ENCODE measurements at regions of chrX and their contacts with region 1.

Region 1: GRCh38 chrX:6325437-6325836 is 96.8 kb upstream of the NLGN4X start:
- DNase-seq: no peak
- ATAC-seq: no peak
- H3K4me3 ChIP-seq: no peak overlapping the region
- H3K4me3 Mint-ChIP-seq: no peak overlapping the region
- H3K27ac ChIP-seq: no peak overlapping the region
- H3K27ac Mint-ChIP-seq: no peak overlapping the region
- H3K4me1 ChIP-seq: no peaks in the 10 kb centered on the region
- H3K4me1 Mint-ChIP-seq: no peaks in the 10 kb centered on the region
- H3K27me3 ChIP-seq: no peaks in the 10 kb centered on the region
- H3K27me3 Mint-ChIP-seq: peaks cover 0 to 7% of the 10 kb centered on the region in 2 donors

Region 2: GRCh38 chrX:6184900-6185515 is 140.4 kb before region 1 on chrX:
- CTCF ChIA-PET with region 1: interaction called in 1 of 2 experiments, 10 read pairs
- POLR2A ChIA-PET with region 1: no interaction called
- DNase-seq: no peak
- ATAC-seq: no peak
- H3K4me3 ChIP-seq: no peak overlapping the region
- H3K4me3 Mint-ChIP-seq: no peak overlapping the region
- H3K27ac ChIP-seq: no peak overlapping the region
- H3K27ac Mint-ChIP-seq: no peak overlapping the region
- H3K4me1 ChIP-seq: no peaks in the 10 kb centered on the region
- H3K4me1 Mint-ChIP-seq: no peaks in the 10 kb centered on the region
- H3K27me3 ChIP-seq: no peaks in the 10 kb centered on the region
- H3K27me3 Mint-ChIP-seq: peaks cover 0 to 3% of the 10 kb centered on the region in 2 donors

Region 3: DNA sequence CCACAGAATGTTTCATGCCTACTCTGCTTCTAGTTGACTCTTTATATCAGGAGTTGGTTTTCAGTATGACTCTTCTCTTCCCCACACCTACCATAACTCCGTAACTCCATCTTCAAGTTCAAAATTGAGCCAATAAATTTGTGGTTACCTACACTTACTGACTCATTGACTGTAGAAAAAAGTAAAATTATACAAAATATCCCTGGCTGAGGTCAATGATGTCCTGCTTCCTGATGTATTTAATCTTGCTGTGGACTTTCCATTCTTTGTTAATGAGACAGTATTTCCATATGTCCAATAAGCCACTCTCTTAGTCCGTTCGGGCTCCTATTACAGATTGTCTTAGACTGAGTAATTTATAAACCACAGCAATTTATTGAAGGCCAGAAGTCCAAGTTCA is 86.9 kb before region 1 on chrX:
- CTCF ChIA-PET with region 1: no interaction called
- POLR2A ChIA-PET with region 1: interaction called in 1 of 2 experiments, 12 read pairs
- DNase-seq: no peak
- ATAC-seq: no peak
- H3K4me3 ChIP-seq: no peak overlapping the region
- H3K4me3 Mint-ChIP-seq: no peak overlapping the region
- H3K27ac ChIP-seq: no peak overlapping the region
- H3K27ac Mint-ChIP-seq: no peak overlapping the region
- H3K4me1 ChIP-seq: no peaks in the 10 kb centered on the region
- H3K4me1 Mint-ChIP-seq: no peaks in the 10 kb centered on the region
- H3K27me3 ChIP-seq: no peaks in the 10 kb centered on the region
- H3K27me3 Mint-ChIP-seq: peaks cover 0 to 6% of the 10 kb centered on the region in 2 donors

Region 4: GRCh38 chrX:6292599-6292998 is 32.8 kb before region 1 on chrX:
- CTCF ChIA-PET with region 1: no interaction called
- POLR2A ChIA-PET with region 1: no interaction called
- DNase-seq: no peak
- ATAC-seq: no peak
- H3K4me3 ChIP-seq: no peak overlapping the region
- H3K4me3 Mint-ChIP-seq: no peak overlapping the region
- H3K27ac ChIP-seq: no peak overlapping the region
- H3K27ac Mint-ChIP-seq: no peak overlapping the region
- H3K4me1 ChIP-seq: no peaks in the 10 kb centered on the region
- H3K4me1 Mint-ChIP-seq: no peaks in the 10 kb centered on the region
- H3K27me3 ChIP-seq: no peaks in the 10 kb centered on the region
- H3K27me3 Mint-ChIP-seq: peaks cover 0 to 3% of the 10 kb centered on the region in 2 donors

Measured in T-cell (primary cell).